Cardiac septum (tissue), 1 donor: ENCODE measurements at regions of chr5 and their contacts with region 1.

Region 1: DNA sequence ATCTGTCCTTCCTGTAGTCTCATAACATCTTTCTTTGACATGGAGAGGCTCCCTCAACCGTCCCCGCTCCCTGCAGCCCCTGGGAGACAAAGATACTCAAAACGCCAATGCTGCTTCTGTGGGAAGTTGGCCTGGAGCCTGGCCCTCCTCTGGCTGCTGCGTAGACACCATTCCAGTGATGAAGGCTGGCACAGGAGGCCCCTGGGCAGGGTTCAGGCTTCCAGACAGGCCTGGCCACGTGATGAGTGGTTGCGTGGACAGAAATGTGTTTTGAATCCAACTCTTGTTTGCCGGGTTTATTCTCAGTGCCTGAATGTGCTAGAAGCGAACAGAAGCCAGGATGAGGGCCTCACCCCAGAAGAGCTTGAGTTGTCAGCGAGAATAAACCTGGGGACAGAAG is 43.2 kb upstream of the NKX2-5 start:
- DNase-seq: peak; percentile 90

Region 2: GRCh38 chr5:172902497-172903200 is 375.5 kb before region 1 on chr5:
- intact Hi-C with region 1: no loop called
- DNase-seq: peak; percentile 87

Region 3: DNA sequence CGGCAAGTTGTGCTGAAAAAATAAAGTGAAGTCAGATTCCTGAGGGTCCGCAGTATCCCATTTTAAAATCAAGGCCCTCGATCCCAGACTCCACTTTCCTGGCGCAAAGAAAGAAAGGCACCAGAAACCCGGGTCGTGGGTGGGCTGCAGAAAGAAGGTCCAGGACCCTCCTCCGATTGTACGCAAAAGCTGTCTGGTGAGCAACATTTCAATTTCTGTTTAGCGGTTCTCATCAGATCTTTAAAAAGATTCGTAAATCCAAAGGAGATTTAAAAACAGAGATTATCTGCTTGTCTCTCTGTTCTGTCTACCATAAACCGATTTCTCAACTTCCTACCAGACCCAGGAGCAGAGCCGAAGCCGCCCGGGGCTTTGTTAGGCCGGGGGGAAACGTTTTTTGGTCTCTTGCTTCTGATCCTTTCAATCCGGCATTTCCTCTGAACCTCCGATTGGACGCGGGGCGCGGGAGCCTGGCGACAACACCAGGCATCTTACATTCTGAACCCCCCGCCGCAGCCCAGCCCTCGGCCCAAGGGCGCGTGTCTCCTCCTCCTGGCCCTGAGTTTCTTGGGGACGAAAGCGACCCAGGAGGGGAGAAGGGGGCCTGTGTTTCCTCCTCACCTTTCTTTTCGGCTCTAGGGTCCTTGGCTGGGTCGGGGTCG is 43.9 kb before region 1 on chr5:
- intact Hi-C with region 1: loop called (anchors 2 kb)
- DNase-seq: no peak

Region 4: GRCh38 chr5:173245319-173246134 is 32.6 kb before region 1 on chr5:
- intact Hi-C with region 1: loop called (anchors 2 kb)
- DNase-seq: no peak

Region 5: DNA sequence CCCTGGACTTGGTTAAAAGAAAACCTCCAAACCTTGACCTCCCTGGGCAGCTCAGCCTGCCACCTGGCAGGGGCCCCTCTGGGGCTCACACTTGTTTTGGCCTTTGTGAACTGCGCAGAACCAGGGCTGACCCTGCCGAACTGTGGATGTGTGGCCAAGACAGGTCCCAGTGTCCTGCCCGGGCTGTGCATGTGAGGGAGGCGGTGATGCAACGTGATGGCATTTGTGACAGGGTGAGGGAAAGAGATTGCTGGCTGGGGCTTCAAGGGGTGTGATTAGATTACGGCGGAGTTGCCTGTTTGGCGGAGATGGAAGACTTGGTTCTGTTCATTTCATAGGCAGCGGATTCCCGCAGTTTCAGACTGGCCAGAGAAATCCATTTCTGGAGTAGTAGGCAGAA is 12.7 kb before region 1 on chr5:
- intact Hi-C with region 1: loop called (anchors 1 kb)
- DNase-seq: peak; percentile 88

Region 6: GRCh38 chr5:173331956-173332479 is 53.8 kb after region 1 on chr5:
- intact Hi-C with region 1: no loop called
- DNase-seq: peak; percentile 88

Region 7: GRCh38 chr5:174082286-174082685 is 804.1 kb after region 1 on chr5:
- intact Hi-C with region 1: no loop called
- DNase-seq: no peak